ENCODE measurements at regions of chr4 and their contacts with region 1.

Region 1: GRCh38 chr4:56843421-56843899 is 22.0 kb upstream of the SPINK2 start:
- DNase-seq: no peak
- H3K4me3 Mint-ChIP-seq: no peak overlapping the region
- H3K27ac Mint-ChIP-seq: no peak overlapping the region
- H3K4me1 Mint-ChIP-seq: no peaks in the 10 kb centered on the region
- H3K27me3 Mint-ChIP-seq: peaks cover 3% of the 10 kb centered on the region

Region 2: GRCh38 chr4:56668298-56668697 is 175.2 kb before region 1 on chr4:
- intact Hi-C with region 1: loop called (anchors 5 kb)
- DNase-seq: no peak
- H3K4me3 Mint-ChIP-seq: no peak overlapping the region
- H3K27ac Mint-ChIP-seq: no peak overlapping the region
- H3K4me1 Mint-ChIP-seq: no peaks in the 10 kb centered on the region
- H3K27me3 Mint-ChIP-seq: peaks cover 36% of the 10 kb centered on the region